ENCODE measurements at regions of chr14 and their contacts with region 1.

Region 1: DNA sequence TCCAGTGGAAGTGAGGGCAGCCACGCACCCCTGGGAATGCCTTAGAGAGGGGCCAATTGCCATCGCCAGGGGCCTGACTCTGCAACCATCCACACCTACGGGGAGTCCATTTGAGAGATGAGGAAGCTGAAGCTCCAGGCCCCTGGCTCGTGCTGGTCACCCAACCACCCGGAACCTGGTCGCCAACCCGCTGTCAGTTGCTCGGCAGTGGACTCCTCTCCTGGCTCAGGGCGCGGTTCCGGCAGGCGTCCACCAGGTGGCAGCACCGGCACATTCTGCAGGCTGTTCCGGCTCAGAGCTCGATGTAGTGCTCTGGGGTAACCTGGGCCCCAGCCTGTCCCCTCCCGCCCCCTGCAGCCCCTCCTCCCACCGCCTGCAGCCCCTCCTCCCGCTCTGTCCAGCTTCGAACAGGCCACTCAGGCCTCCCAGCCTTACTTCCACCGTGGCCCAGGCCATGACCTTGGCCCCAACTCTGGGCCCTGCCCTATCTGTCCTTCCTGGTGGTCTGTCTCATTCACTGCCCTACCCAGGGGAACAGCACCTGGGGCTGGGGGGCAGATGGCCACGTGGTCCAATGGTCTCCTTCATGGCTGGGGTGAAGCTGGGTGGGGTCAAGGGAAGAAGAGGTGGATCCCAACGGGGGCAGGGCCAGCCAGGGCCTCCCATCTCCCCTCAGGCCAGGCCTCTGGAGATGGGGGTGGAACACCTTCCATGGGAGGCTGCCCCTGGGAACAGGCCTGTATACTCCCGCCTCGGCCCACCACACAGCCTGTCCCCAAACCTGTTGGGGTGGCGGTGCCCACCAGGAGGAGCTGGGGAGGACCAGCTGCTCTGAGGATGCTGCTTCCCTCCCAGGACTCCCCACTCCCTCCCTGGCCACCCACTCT is 15.7 kb downstream of the SIVA1 start:
- DNase-seq: peak; percentile 94
- H3K4me3 ChIP-seq: no peak overlapping the region; a peak in 1 of 4 replicates
- H3K27ac ChIP-seq: peak overlapping the region in 1 of 2 experiments; percentile 35; a peak in 1 of 4 replicates
- H3K4me1 ChIP-seq: peaks cover 0 to 7% of the 10 kb centered on the region in 2 experiments; a peak in 1 of 4 replicates
- H3K27me3 ChIP-seq: no peaks in the 10 kb centered on the region
- CTCF ChIP-seq: peak; percentile 70
- EP300 ChIP-seq: no peak
- RAD21 ChIP-seq: peak; percentile 88

Region 2: DNA sequence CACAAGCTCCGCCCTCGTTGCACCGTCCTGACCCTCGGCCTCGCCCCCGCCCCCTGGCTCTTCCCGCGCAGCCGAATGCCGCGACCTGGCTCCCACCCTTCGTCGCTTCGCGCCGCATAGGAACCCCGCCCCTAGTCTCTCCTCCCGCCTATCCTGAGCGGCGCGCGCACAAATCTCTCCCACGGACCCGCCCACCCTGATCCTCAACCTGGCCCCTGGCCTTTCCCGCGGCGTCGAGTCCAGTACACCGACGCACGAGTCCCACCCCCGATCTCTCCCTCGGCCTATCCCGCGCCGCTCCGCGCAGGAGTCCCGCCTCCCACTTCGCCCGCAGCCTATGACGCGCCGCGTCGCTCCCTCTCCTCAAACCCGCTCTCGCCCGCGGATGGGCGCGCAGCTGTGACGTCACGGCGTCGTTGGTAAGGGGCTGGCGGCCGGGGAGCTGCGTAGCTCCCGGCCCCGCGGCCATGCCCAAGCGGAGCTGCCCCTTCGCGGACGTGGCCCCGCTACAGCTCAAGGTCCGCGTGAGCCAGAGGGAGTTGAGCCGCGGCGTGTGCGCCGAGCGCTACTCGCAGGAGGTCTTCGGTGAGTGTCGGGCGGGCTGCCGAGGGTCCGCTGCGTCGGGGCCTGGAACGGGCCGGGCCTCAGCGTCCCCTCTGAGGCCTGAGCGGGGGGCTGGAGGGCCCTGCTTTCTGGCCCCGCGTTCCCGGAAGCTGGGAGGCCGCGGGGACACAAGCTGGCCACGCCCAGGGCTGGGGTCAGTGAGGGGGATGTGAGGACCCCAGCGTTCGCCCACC is 15.7 kb before region 1 on chr14 and contains the start of gene SIVA1:
- CTCF ChIA-PET with region 1: interaction called, 37 read pairs
- POLR2A ChIA-PET with region 1: interaction called, 3 read pairs
- DNase-seq: peak; percentile 99
- H3K4me3 ChIP-seq: peak within 1 kb of the TSS; percentile 88 to 99
- H3K27ac ChIP-seq: peak within 1 kb of the TSS; percentile 70 to 72; a peak in 3 of 4 replicates
- H3K4me1 ChIP-seq: peaks cover 8 to 14% of the 10 kb centered on the region in 2 experiments; a peak in 3 of 4 replicates
- H3K27me3 ChIP-seq: no peaks in the 10 kb centered on the region
- CTCF ChIP-seq: no peak
- EP300 ChIP-seq: 0 out of 4 replicates have a peak, but pooled peaks of 1 of the 2 experiments have one; percentile 17
- RAD21 ChIP-seq: no peak
- polyA plus RNA-seq, gene SIVA1: 122 and 137 TPM in 2 replicates

Region 3: DNA sequence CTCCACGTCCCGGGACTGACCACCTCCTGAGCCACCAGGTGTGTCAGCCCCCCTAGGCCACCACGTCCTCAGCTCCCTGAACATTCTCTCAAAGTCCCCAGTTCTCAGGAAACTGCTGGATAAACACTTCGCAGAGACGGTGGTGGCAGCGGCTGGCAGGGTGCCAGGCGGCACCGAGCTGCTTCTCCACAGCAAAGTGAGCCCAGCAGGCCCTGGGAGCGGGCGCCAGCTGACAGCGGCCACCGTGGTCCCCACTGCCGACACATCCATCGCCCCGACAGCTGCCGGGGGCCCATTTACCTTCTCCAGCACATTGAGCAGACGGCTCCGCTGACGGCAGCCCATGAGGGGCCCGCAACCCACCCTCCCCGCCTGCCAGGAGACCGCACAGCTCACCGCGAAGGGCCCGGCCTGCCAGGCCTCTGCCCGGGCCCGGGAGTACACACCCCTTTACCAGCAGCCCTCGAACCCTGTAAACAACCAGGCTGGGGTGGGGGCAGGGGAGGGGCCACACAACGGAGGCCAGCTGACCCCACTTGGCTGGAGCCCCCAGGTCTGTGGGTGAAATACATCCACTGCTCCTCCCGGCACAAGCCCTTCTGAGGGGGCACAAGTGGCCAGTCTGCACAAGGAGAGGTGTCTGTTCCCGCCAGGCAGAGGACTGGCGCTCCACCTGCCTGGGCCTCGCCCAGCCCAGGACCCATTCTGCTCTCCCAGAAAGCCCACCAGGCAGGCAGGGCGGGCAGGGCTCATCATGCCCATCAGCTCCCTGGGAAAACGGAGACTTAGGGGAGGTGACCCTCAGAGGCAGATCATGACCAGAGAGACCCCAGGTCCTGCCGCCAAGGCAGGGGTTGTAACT is 16.4 kb after region 1 on chr14:
- CTCF ChIA-PET with region 1: interaction called, 35 read pairs
- POLR2A ChIA-PET with region 1: no interaction called
- DNase-seq: no peak
- H3K4me3 ChIP-seq: no peak overlapping the region
- H3K27ac ChIP-seq: no peak overlapping the region
- H3K4me1 ChIP-seq: no peaks in the 10 kb centered on the region; a peak in 1 of 4 replicates
- H3K27me3 ChIP-seq: no peaks in the 10 kb centered on the region
- CTCF ChIP-seq: no peak
- EP300 ChIP-seq: no peak
- RAD21 ChIP-seq: no peak

Region 4: GRCh38 chr14:104800015-104800770 is 31.5 kb after region 1 on chr14:
- CTCF ChIA-PET with region 1: interaction called, 25 read pairs
- POLR2A ChIA-PET with region 1: no interaction called
- DNase-seq: peak; percentile 97
- H3K4me3 ChIP-seq: peak overlapping the region; percentile 47 to 67; a peak in 3 of 4 replicates
- H3K27ac ChIP-seq: peak overlapping the region in 1 of 2 experiments; percentile 39; a peak in 1 of 4 replicates
- H3K4me1 ChIP-seq: peaks cover 17 to 51% of the 10 kb centered on the region in 2 experiments; a peak in 3 of 4 replicates
- H3K27me3 ChIP-seq: no peaks in the 10 kb centered on the region
- CTCF ChIP-seq: peak; percentile 46
- EP300 ChIP-seq: no peak
- RAD21 ChIP-seq: no peak

Region 5: GRCh38 chr14:104813291-104813690 is 44.6 kb after region 1 on chr14:
- CTCF ChIA-PET with region 1: interaction called, 18 read pairs
- POLR2A ChIA-PET with region 1: no interaction called
- DNase-seq: no peak
- H3K4me3 ChIP-seq: no peak overlapping the region
- H3K27ac ChIP-seq: no peak overlapping the region
- H3K4me1 ChIP-seq: peaks cover 3% of the 10 kb centered on the region in 2 experiments; a peak in 2 of 4 replicates
- H3K27me3 ChIP-seq: no peaks in the 10 kb centered on the region
- CTCF ChIP-seq: no peak
- EP300 ChIP-seq: no peak
- RAD21 ChIP-seq: no peak

Region 6: DNA sequence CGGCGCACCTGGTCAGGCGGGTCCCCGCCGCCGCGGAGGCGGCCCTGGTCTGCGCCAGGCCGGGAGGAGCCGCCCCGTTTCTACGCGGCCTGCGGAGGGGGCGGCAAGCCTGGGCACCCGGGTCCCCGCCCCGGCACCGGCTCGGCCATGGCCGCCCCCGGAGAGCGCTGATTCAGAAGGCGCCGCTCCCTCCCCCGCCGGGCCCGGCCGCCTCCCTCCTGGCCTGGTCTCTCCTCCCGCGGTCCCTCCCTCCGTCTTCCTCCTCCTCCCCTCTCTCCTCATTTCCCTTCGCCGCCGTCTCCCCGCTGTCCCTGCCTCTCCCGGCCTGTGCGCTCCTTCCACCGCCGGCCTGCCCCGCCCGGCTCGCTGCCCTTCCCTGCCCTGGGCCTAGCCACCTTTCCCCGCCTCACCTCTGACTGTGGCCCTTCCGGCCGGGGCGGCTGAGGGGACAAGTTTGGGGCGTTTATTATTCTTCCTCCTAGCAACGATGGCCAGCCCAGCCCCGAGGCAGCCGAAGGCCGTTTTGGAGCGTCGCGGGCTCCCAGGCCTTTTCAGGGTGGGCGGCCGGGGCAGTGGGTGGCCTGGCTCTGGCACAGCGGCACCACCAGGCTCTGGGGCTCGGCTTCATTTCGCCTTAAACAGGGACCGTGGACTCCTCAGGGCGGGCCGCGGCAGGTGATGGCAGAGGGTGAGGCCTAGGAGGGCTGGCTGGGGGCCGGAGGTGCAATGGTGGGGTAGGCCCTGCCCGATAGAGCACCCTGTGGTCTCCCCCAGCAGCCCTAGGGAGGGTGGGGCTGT is 97.2 kb after region 1 on chr14:
- CTCF ChIA-PET with region 1: interaction called, 21 read pairs
- POLR2A ChIA-PET with region 1: no interaction called
- DNase-seq: peak; percentile 80
- H3K4me3 ChIP-seq: peak overlapping the region; percentile 63 to 82
- H3K27ac ChIP-seq: peak overlapping the region in 1 of 2 experiments; percentile 35; a peak in 1 of 4 replicates
- H3K4me1 ChIP-seq: peaks cover 7 to 12% of the 10 kb centered on the region in 2 experiments; a peak in 2 of 4 replicates
- H3K27me3 ChIP-seq: no peaks in the 10 kb centered on the region
- CTCF ChIP-seq: no peak
- EP300 ChIP-seq: no peak
- RAD21 ChIP-seq: no peak

Region 7: GRCh38 chr14:105039458-105040205 is 271.0 kb after region 1 on chr14:
- CTCF ChIA-PET with region 1: no interaction called
- POLR2A ChIA-PET with region 1: no interaction called
- DNase-seq: peak; percentile 48
- H3K4me3 ChIP-seq: no peak overlapping the region
- H3K27ac ChIP-seq: no peak overlapping the region
- H3K4me1 ChIP-seq: no peaks in the 10 kb centered on the region
- H3K27me3 ChIP-seq: no peaks in the 10 kb centered on the region
- CTCF ChIP-seq: no peak
- EP300 ChIP-seq: no peak
- RAD21 ChIP-seq: no peak

Measured in SK-N-SH (cell line).